Left ventricle myocardium superior (tissue), 1 donor: ENCODE measurements at regions of chr12 and their contacts with region 1.

Region 1: DNA sequence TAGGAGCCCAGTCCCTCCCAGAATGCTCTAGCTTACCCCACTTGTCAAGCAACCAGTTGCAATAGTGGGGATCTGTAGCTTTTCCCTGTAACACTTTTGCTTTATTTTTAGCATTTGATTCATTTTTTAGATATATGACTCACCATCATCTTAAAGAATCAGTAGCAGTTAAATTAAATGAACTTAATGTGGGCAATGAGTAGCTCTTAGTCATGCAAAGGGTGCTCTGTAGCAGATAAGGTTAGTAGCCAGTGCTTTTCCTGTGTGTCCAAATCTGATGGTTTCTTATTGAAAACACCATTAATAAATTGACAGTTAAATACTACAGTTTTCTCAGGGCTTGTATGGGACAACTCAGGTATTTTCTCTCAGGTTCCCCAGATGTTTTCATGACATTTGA is 311.8 kb downstream of the RERGL start:
- DNase-seq: no peak
- ATAC-seq: no peak

Region 2: DNA sequence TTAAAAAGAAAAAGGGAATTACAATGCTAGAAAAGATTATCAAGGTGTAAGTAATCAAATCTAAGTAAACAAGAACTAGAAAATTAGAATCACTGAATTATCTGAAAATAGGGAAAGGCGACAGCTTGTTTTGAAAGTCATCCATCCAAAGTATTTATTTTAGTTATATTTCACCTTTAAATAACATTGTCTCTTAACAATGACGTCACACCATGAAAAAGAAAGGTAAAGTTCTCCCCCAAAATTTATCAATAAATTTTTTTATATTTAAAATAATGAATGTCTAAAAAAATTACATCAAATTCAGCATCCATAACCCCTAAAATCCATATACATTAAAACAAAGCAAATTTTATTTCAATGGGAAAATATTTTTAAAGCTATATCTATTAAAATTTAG is 88.6 kb after region 1 on chr12:
- intact Hi-C with region 1: loop called (anchors 5 kb)
- DNase-seq: no peak
- ATAC-seq: no peak